CD8-positive, alpha-beta T cell (primary cell): ENCODE measurements at regions of chr12 and their contacts with region 1.

Region 1: DNA sequence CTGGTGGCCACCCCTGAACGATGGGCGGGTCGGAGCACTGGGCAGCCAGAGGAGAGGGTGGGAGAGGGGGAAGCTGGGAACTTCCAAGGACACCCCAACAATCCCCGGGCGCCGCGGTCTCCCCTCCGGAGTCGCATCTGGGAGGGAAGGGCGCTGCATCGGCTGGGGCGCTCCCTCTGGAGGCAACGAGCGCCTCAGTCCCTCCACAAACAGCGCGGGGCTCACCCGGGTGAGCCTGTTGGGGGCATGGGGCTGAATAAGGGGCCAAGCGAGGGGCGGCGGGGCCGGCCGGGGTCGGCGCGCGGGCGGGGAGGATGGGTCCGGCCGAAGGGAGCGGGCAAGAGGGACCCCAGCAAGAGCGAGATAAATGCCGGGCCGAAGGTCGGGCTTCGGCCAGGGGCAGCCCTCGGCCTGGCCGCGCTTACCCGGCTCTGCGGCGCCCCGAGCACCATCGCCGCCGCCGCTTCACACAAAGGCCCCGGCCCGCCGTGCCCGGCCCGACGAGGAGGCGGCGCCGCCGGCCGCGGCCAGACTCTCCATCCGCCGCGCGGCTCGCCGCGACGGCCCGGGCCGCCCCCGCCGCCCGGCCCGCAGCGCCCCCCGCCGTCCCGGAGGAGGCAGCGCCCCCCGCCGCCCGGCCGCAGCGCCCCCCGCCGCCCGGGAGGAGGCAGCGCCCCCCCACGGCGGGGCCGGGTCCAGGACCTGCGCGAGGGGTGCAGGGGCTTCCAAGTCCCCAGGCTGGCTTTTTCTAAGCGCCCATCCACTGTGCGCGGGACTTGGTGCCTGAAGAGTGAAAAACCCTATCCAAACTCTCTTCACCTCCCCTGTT is at the start of gene ZBTB39:
- DNase-seq: peak; percentile 49 to 84 (median 67)
- ATAC-seq: peak; percentile 88
- H3K4me3 ChIP-seq: peak within 1 kb of the TSS; percentile 66 to 70
- H3K4me3 Mint-ChIP-seq: peak within 1 kb of the TSS; percentile 97
- H3K27ac ChIP-seq: peak within 1 kb of the TSS; percentile 39 to 64
- H3K27ac Mint-ChIP-seq: peak within 1 kb of the TSS; percentile 92
- H3K4me1 ChIP-seq: peaks cover 36% of the 10 kb centered on the region
- H3K4me1 Mint-ChIP-seq: peaks cover 52% of the 10 kb centered on the region
- H3K27me3 ChIP-seq: no peaks in the 10 kb centered on the region
- H3K27me3 Mint-ChIP-seq: no peaks in the 10 kb centered on the region
- CTCF ChIP-seq: peak; percentile 43
- total RNA-seq, gene ZBTB39: 9.9 to 11.3 TPM

Region 2: GRCh38 chr12:55874443-55874842 is 1131.8 kb before region 1 on chr12:
- CTCF ChIA-PET with region 1: no interaction called
- POLR2A ChIA-PET with region 1: no interaction called
- intact Hi-C with region 1: no loop called
- DNase-seq: no peak
- ATAC-seq: no peak
- H3K4me3 ChIP-seq: no peak overlapping the region
- H3K4me3 Mint-ChIP-seq: no peak overlapping the region
- H3K27ac ChIP-seq: no peak overlapping the region
- H3K27ac Mint-ChIP-seq: no peak overlapping the region
- H3K4me1 ChIP-seq: no peaks in the 10 kb centered on the region
- H3K4me1 Mint-ChIP-seq: no peaks in the 10 kb centered on the region
- H3K27me3 ChIP-seq: no peaks in the 10 kb centered on the region
- H3K27me3 Mint-ChIP-seq: no peaks in the 10 kb centered on the region
- CTCF ChIP-seq: no peak

Region 3: DNA sequence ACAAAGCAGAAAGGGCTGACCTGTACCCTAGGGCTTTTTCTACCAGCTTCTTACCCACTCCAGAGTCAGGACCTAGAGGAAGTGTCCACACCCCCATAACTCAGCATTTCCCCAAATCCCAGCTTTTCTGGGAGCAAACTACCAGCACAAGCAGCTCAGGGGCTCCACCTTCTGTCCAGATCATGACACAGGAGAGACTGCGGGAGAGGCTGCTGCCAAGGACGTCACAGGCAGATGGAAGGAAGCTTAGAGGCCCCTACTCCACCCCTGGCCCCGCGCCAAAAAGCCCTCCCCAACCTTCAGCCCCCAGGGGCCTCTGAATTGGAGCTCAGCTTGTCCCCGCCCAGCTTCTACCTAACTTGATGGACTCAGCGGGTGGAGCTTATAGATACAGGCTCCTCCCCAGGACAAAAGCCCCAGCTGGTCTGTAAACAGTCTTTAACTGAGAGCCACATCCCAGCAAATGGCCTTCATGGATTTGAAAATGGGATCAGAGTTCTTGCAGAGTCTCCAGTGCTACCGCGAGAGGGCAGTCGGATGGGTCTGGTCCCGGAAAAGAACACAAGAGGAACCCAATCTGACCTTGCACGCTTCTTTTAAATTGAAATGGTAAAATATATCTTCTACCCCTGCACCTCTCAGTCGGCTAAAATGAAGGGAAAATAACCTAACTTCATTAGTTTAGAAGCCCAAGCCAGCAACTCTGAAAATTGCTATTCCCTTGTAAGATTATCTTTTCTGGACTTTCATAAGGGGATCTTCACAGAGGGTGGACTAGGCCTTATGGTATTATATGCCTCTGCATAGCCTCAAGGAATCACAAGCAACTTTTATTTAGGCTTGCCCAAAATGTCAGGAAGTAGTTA is 369.3 kb before region 1 on chr12:
- CTCF ChIA-PET with region 1: no interaction called
- POLR2A ChIA-PET with region 1: no interaction called
- intact Hi-C with region 1: loop called in 1 of 2 experiments (anchors 10 kb)
- DNase-seq: peak; percentile 91 to 99 (median 97)
- ATAC-seq: peak; percentile 71
- H3K4me3 ChIP-seq: peak overlapping the region; percentile 58 to 79
- H3K4me3 Mint-ChIP-seq: peak overlapping the region; percentile 98
- H3K27ac ChIP-seq: peak overlapping the region; percentile 79 to 87
- H3K27ac Mint-ChIP-seq: peak overlapping the region; percentile 97
- H3K4me1 ChIP-seq: peaks cover 45% of the 10 kb centered on the region
- H3K4me1 Mint-ChIP-seq: peaks cover 57% of the 10 kb centered on the region
- H3K27me3 ChIP-seq: no peaks in the 10 kb centered on the region
- H3K27me3 Mint-ChIP-seq: no peaks in the 10 kb centered on the region
- CTCF ChIP-seq: peak; percentile 71

Region 4: DNA sequence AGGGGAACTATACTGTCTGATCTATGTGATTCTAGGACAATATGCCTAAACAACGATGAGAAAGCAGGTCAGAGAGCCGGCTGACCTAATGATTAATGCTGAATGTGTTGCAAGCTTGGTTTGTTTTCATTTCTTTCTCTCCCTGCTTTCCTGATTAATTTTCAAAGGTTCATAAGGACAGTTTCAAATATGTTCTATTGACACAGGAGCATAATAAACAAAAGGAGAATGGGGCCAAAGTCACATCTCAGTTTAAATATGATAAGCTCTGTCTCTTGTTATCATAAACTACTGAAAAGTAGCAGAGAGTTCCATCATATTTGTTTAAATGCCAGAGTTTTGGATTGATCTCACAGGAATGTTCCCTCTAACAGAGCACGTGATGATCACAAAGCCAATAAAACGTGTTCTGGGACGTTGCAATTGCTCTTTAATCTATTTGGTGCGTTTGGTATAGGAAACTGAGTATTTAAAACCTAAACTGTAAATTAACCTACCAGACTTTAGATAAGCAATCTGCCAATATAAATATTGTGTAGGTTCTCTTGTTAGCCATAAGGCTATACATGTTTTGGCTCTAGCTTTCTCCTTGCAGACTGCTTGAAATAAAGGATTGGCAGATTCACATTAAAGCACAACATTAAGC is 246.8 kb before region 1 on chr12:
- CTCF ChIA-PET with region 1: interaction called, 21 read pairs
- POLR2A ChIA-PET with region 1: no interaction called
- intact Hi-C with region 1: loop called in 1 of 2 experiments (anchors 1 kb)
- DNase-seq: no peak
- ATAC-seq: no peak
- H3K4me3 ChIP-seq: no peak overlapping the region
- H3K4me3 Mint-ChIP-seq: no peak overlapping the region
- H3K27ac ChIP-seq: no peak overlapping the region
- H3K27ac Mint-ChIP-seq: no peak overlapping the region
- H3K4me1 ChIP-seq: no peaks in the 10 kb centered on the region
- H3K4me1 Mint-ChIP-seq: no peaks in the 10 kb centered on the region
- H3K27me3 ChIP-seq: no peaks in the 10 kb centered on the region
- H3K27me3 Mint-ChIP-seq: peaks cover 5% of the 10 kb centered on the region
- CTCF ChIP-seq: no peak

Region 5: DNA sequence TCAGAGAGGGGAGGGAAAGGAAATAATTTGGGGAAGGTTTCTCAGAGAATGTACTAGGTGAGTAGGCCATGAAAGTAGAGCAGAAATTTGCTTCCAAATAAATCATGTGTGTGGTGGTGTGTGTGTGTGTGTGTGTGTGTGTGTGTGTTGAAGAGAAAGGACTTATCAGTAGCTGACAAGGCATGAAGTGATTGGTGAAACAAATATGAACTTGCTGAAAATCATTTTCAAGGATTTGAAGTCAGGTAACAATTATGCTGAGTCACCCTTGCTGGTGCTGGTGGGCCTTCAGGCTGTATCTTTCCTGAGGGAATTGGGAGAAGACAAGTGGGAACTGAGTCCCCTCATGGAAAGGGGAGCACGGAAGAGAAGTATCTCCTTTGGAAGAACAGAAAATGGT is 187.6 kb before region 1 on chr12:
- CTCF ChIA-PET with region 1: no interaction called
- POLR2A ChIA-PET with region 1: no interaction called
- intact Hi-C with region 1: no loop called
- DNase-seq: no peak
- ATAC-seq: no peak
- H3K4me3 ChIP-seq: no peak overlapping the region
- H3K4me3 Mint-ChIP-seq: no peak overlapping the region
- H3K27ac ChIP-seq: no peak overlapping the region
- H3K27ac Mint-ChIP-seq: no peak overlapping the region
- H3K4me1 ChIP-seq: no peaks in the 10 kb centered on the region
- H3K4me1 Mint-ChIP-seq: no peaks in the 10 kb centered on the region
- H3K27me3 ChIP-seq: no peaks in the 10 kb centered on the region
- H3K27me3 Mint-ChIP-seq: peaks cover 3% of the 10 kb centered on the region
- CTCF ChIP-seq: no peak

Region 6: GRCh38 chr12:57018906-57019305 is 12.7 kb after region 1 on chr12:
- CTCF ChIA-PET with region 1: interaction called, 10 read pairs
- POLR2A ChIA-PET with region 1: no interaction called
- intact Hi-C with region 1: no loop called
- DNase-seq: no peak
- ATAC-seq: no peak
- H3K4me3 ChIP-seq: no peak overlapping the region
- H3K4me3 Mint-ChIP-seq: no peak overlapping the region
- H3K27ac ChIP-seq: no peak overlapping the region
- H3K27ac Mint-ChIP-seq: no peak overlapping the region
- H3K4me1 ChIP-seq: peaks cover 16% of the 10 kb centered on the region
- H3K4me1 Mint-ChIP-seq: peaks cover 12% of the 10 kb centered on the region
- H3K27me3 ChIP-seq: peaks cover 0 to 3% of the 10 kb centered on the region in 2 experiments
- H3K27me3 Mint-ChIP-seq: peaks cover 4% of the 10 kb centered on the region
- CTCF ChIP-seq: no peak

Region 7: DNA sequence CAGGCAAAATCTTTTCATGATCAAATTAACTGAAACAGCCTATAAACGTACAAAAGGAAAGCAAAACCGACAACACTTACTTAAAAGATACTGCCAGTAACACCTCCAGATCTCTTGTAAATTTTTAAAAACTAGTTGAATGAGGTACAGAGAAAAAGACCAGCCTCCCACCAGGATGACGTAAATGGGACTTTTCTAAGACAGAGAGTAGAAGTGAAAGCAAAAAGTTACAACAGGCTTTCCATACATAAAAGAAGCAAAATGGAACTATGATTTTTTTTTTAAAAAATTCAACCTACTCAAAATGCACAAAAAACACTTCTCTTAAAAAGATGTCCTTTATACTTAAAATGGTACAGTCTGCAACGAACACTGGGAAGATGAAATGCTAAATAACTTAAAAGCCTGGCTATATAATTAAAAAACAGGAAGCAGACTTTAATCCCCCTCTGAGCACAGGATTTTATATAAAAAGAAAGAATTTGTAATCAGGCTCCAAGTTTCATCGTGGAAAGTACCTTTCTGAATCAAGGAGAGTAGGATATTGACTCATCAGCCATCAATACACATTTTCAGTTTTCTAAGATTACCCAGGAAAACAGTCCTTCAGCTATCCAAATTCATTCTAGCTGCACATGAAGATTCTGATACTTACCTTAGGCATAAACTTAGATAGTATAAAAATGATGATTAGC is 57.9 kb after region 1 on chr12:
- CTCF ChIA-PET with region 1: interaction called, 31 read pairs
- POLR2A ChIA-PET with region 1: interaction called, 7 read pairs
- intact Hi-C with region 1: loop called (anchors 1 kb)
- DNase-seq: peak in 6 of 9 experiments; percentile 9 to 94 (median 58)
- ATAC-seq: peak; percentile 96
- H3K4me3 ChIP-seq: peak overlapping the region; percentile 19 to 37
- H3K4me3 Mint-ChIP-seq: peak overlapping the region; percentile 78
- H3K27ac ChIP-seq: peak overlapping the region; percentile 61 to 88
- H3K27ac Mint-ChIP-seq: peak overlapping the region; percentile 95
- H3K4me1 ChIP-seq: peaks cover 24% of the 10 kb centered on the region
- H3K4me1 Mint-ChIP-seq: peaks cover 28% of the 10 kb centered on the region
- H3K27me3 ChIP-seq: no peaks in the 10 kb centered on the region
- H3K27me3 Mint-ChIP-seq: no peaks in the 10 kb centered on the region
- CTCF ChIP-seq: no peak

Region 8: DNA sequence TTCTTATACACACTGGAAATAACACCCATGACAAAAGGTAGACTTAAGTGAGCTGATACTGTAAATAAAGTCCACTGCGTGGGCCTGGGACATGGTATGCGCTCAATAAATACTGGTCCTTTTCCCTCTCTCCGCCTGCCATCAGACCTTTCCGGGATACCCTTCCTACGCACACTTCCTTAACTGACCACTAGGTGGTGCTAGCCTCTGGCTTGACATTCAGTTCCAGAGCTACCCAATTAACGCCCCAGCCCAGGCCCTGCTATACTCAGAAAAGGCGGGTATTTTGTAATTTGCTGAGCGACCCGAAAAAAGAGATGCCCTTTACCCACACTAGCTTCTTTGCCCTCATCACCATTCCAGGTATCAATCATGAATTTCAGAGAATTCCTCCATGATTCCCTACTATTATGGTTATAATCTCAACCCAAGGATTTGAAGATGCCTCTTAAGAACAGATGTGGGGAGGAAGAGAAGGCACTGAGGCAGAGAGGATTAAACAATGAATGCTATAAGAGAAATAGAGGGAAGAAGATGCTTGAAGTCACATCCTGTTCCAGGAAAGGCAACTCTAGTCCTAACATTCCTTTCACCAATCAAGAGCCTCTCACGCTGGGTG is 118.2 kb after region 1 on chr12:
- CTCF ChIA-PET with region 1: interaction called, 4 read pairs
- POLR2A ChIA-PET with region 1: no interaction called
- intact Hi-C with region 1: loop called in 1 of 2 experiments (anchors 5 kb)
- DNase-seq: peak; percentile 45 to 86 (median 76)
- ATAC-seq: peak; percentile 69
- H3K4me3 ChIP-seq: no peak overlapping the region
- H3K4me3 Mint-ChIP-seq: no peak overlapping the region
- H3K27ac ChIP-seq: no peak overlapping the region
- H3K27ac Mint-ChIP-seq: no peak overlapping the region
- H3K4me1 ChIP-seq: peaks cover 13% of the 10 kb centered on the region
- H3K4me1 Mint-ChIP-seq: peaks cover 12% of the 10 kb centered on the region
- H3K27me3 ChIP-seq: peaks cover 0 to 5% of the 10 kb centered on the region in 2 experiments
- H3K27me3 Mint-ChIP-seq: no peaks in the 10 kb centered on the region
- CTCF ChIP-seq: peak; percentile 91

Region 9: DNA sequence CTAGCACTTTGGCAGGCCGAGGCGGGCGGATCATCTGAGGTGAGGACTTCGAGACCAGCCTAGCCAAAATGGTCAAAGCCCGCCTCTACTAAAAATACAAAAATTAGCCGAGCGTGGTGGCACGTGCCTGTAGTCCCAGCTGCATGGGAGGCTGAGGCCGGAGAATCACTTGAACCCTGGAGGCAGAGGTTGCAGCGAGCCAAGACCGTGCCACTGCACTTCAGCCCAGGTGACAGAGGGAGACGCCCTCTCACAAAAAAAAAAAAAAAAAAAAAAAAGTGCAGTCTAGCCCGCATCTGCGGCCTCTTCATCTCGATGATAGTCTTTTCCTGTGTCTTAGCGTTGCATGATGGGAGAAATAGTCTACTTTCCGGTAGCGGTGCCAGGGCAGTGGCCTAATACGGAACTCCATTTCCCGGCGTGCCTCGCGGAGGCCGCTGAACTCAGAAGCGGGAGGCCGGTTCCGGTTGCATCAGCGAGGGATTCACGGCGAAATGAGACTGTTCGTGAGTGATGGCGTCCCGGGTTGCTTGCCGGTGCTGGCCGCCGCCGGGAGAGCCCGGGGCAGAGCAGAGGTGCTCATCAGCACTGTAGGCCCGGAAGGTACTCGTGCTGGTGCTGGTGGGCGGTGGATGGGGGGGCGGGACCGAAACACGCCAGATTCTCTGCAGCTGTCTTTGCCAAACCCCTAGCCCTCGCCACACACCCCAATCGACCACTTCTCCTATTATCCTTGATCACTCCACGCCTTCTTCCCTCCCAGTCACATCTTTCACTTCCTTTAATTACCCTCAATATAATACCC is 481.6 kb after region 1 on chr12 and contains the start of gene MARS1:
- CTCF ChIA-PET with region 1: no interaction called
- POLR2A ChIA-PET with region 1: no interaction called
- intact Hi-C with region 1: loop called in 1 of 2 experiments (anchors 5 kb)
- DNase-seq: peak; percentile 78 to 98 (median 92)
- ATAC-seq: peak; percentile 94
- H3K4me3 ChIP-seq: peak within 1 kb of the TSS; percentile 66 to 85
- H3K4me3 Mint-ChIP-seq: peak within 1 kb of the TSS; percentile 93
- H3K27ac ChIP-seq: peak within 1 kb of the TSS; percentile 61 to 85
- H3K27ac Mint-ChIP-seq: peak within 1 kb of the TSS; percentile 94
- H3K4me1 ChIP-seq: peaks cover 19% of the 10 kb centered on the region
- H3K4me1 Mint-ChIP-seq: peaks cover 36% of the 10 kb centered on the region
- H3K27me3 ChIP-seq: no peaks in the 10 kb centered on the region
- H3K27me3 Mint-ChIP-seq: no peaks in the 10 kb centered on the region
- CTCF ChIP-seq: no peak
- total RNA-seq, gene MARS1: 213 to 226 TPM